Activated naive CD8-positive, alpha-beta T cell treated with anti-CD3 and anti-CD28 coated beads, Interleukin-2, amount 10 ng/mL, durations not matched to agents 7 days and 5 days (primary cell): ENCODE measurements at regions of chr19 and their contacts with region 1.

Region 1: DNA sequence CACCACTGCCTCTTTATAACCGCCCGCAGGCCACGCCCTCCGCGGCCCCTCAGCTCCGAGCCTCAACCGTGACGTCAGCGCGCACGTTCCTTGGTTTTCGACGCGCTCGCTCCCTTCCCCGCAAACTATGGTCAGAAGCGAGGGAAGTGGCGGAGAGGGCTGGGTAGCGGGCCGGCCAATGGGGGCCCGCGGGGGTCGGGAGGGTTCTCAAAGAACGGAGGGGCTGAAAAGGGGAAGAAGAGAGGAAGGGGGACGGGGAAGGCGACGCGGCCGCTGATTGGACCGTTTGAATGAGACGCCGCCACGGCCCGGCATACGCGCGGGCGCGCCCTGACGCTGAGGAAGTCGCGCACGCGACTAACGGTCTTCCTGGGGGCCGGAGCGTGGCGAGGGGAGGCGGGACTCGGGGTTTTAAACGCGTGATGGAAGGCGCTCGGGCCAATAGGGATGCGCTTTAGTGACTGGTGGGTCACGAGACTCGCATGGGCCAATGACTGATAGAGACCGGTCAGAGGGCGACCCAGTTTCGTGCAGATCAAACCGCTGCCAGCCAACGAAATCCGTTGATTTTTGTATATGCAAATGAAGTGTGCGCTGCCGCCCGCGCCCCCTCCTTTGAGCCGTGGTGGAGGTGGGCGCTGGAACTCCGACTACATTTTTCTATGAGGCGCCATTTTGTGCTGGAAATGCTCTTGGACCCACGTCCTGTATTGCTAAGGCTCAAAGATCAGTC is 378 bp upstream of the UBE2S start:
- DNase-seq: peak; percentile 96
- ATAC-seq: peak; percentile 93
- H3K4me3 Mint-ChIP-seq: peak overlapping the region; percentile 95
- H3K27ac Mint-ChIP-seq: peak overlapping the region; percentile 99
- H3K4me1 Mint-ChIP-seq: peaks cover 32% of the 10 kb centered on the region
- H3K27me3 Mint-ChIP-seq: no peaks in the 10 kb centered on the region

Region 2: DNA sequence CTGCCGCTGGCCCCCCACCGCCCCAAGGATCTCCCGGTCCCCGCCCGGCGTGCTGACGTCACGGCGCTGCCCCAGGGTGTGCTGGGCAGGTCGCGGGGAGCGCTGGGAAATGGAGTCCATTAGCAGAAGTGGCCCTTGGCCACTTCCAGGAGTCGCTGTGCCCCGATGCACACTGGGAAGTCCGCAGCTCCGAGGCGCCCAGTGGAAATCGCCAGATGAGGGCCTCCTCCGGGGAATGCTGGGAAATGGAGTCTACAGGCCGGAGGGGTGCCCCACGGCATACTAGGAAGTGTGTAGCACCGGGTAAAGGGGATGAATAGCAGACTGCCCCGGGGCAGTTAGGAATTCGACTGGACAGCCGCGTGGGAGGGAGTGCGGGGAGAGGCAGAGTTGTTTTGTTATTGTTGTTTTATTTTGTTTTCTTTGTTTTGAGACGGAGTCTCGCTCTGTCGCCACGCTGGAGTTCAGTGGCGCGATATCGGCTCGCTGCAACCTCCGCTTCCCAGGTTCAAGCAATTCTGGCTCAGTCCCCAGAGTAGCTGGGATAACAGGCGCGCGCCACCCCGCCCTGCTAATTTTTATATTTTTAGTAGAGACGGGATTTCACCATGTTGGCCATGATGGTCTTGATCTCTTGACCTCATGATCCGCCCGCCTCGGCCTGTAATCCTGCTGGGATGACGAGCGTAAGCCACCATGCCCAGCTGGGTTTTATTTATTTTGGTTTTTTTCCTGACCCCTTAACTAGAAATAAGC is 290.2 kb before region 1 on chr19 and contains the start of gene PPP1R12C:
- POLR2A ChIA-PET with region 1: interaction called, 12 read pairs
- DNase-seq: peak; percentile 97
- ATAC-seq: peak; percentile 93
- H3K4me3 Mint-ChIP-seq: peak within 1 kb of the TSS; percentile 98
- H3K27ac Mint-ChIP-seq: peak within 1 kb of the TSS; percentile 96
- H3K4me1 Mint-ChIP-seq: peaks cover 27% of the 10 kb centered on the region
- H3K27me3 Mint-ChIP-seq: peaks cover under 1% of the 10 kb centered on the region
- total RNA-seq, gene PPP1R12C: 147 to 157 TPM

Region 3: GRCh38 chr19:55279770-55280643 is 128.0 kb before region 1 on chr19 and contains the start of gene HSPBP1:
- POLR2A ChIA-PET with region 1: interaction called, 10 read pairs
- DNase-seq: peak; percentile 99
- ATAC-seq: peak; percentile 87
- H3K4me3 Mint-ChIP-seq: peak within 1 kb of the TSS; percentile 99
- H3K27ac Mint-ChIP-seq: peak within 1 kb of the TSS; percentile 98
- H3K4me1 Mint-ChIP-seq: peaks cover 28% of the 10 kb centered on the region
- H3K27me3 Mint-ChIP-seq: peaks cover 9% of the 10 kb centered on the region
- total RNA-seq, gene HSPBP1: 19.5 to 20.3 TPM

Region 4: DNA sequence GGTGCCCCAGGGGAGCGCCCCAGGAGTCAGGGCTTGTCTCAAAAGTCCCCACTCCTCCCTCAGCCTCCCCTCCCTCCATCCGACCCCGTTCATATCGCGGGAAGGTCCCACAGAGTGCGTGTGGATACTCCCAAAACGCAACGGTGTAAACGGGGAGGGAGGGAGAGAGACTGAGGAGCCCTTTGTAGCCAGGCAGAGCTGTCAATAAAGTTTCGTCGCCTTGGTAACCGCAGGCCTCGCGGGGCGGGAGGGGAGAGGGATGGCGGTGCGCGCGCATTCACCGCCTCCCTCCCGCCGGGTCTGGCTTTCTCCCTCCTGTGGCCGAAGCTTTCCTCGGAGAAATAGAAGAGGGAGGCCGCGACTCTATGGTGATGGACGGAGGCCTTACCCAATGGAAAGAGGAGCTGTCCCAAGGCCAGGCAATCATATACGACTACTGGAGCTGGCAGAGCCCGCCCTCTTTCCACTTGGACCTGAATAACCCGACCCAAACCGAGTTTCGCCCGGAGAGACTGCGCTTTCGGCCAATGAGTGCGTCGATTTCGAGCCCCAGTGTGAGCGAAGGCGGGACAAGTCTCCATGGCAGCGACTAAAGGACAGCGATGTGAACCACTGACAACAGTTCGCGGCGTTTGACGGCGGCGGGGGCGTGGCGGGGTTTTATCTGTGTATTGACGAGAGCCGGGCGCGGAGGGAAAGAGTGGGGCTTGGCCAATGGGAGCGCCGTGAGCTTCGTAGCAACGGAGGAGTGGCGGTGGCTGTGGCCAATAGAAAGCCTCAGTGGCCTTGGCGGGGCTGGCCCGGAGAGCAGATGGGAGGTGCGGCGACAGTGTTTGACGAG is 68.7 kb before region 1 on chr19 and contains the start of gene KMT5C:
- POLR2A ChIA-PET with region 1: interaction called, 24 read pairs
- DNase-seq: peak; percentile 99
- ATAC-seq: peak; percentile 87
- H3K4me3 Mint-ChIP-seq: peak within 1 kb of the TSS; percentile 97
- H3K27ac Mint-ChIP-seq: peak within 1 kb of the TSS; percentile 98
- H3K4me1 Mint-ChIP-seq: peaks cover 14% of the 10 kb centered on the region
- H3K27me3 Mint-ChIP-seq: peaks cover 16% of the 10 kb centered on the region
- total RNA-seq, gene KMT5C: 26.4 to 28.5 TPM

Region 5: GRCh38 chr19:55442372-55443059 is 34.5 kb after region 1 on chr19:
- POLR2A ChIA-PET with region 1: no interaction called
- DNase-seq: no peak
- ATAC-seq: no peak
- H3K4me3 Mint-ChIP-seq: no peak overlapping the region
- H3K27ac Mint-ChIP-seq: no peak overlapping the region
- H3K4me1 Mint-ChIP-seq: peaks cover 14% of the 10 kb centered on the region
- H3K27me3 Mint-ChIP-seq: peaks cover 62% of the 10 kb centered on the region

Region 6: DNA sequence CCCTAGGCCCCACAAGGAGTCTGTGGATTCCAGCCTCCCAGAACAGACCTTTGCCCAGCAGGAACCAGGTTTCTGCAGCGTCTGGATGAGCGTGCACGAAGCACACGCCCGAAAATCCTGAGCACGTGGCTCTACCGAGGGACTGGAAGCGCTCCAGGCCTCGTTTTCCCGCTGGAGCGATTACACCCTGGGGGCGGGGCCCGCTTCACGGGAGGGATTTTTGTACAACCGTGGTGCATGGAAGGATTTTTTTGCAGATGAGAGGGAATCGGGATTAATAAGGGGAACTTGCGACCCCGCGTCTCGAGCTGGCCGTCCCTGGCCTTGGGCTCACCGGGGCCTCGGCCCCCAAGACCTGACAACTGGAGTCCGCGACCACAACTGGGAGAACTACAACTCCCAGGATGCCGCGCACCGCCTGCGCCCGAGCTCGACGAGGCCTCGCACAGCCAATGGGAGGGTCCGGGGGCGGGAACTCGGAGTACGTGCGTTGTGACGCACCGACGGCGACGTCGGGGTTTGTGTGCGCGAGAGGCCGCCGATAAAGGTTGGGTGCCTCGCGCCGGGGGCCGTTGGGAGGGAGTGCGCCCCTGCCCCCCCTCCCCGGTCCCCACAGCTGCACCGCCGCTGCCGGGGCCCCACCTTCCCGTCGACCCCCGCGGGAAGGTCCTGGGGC is 68.3 kb after region 1 on chr19 and contains the start of gene ZNF628:
- POLR2A ChIA-PET with region 1: interaction called, 10 read pairs
- DNase-seq: peak; percentile 97
- ATAC-seq: peak; percentile 89
- H3K4me3 Mint-ChIP-seq: peak within 1 kb of the TSS; percentile 89
- H3K27ac Mint-ChIP-seq: peak within 1 kb of the TSS; percentile 94
- H3K4me1 Mint-ChIP-seq: peaks cover 18% of the 10 kb centered on the region
- H3K27me3 Mint-ChIP-seq: no peaks in the 10 kb centered on the region
- total RNA-seq, gene ZNF628: 9.4 to 11.5 TPM